Mammary epithelial cell (primary cell): ENCODE measurements at regions of chr6 and their contacts with region 1.

Region 1: DNA sequence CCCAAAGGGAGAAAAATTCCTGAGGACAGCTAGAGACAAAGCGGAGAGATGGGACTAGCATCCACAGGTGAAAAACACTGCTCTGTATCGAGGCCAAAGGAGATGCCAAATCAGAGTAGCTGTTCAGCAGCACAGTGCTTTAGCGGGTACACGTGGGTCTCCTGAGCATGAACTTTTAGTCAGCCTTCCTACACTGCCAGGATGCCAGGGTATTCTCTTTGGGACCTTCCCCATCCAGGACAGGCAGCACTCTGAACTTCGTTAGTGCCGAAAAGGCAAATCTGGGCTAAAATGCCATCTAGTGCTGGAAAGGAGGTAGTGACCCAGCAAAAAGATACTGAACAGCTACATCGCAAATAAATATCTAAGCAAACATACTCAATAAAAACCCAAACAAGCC is 64.9 kb downstream of the C6orf58 start:
- DNase-seq: peak; percentile 20
- H3K4me3 ChIP-seq: no peak overlapping the region
- H3K27ac ChIP-seq: no peak overlapping the region
- H3K4me1 ChIP-seq: no peaks in the 10 kb centered on the region
- H3K27me3 ChIP-seq: peaks cover 4% of the 10 kb centered on the region
- CTCF ChIP-seq: peak; percentile 67 to 82

Region 2: GRCh38 chr6:127464881-127465459 is 176.9 kb before region 1 on chr6:
- CTCF ChIA-PET with region 1: no interaction called
- dilution Hi-C with region 1: no loop called
- in situ Hi-C with region 1: no loop called
- intact Hi-C with region 1: loop called (anchors 5 kb)
- DNase-seq: peak; percentile 43
- H3K4me3 ChIP-seq: no peak overlapping the region
- H3K27ac ChIP-seq: no peak overlapping the region
- H3K4me1 ChIP-seq: no peaks in the 10 kb centered on the region
- H3K27me3 ChIP-seq: peaks cover 3% of the 10 kb centered on the region
- CTCF ChIP-seq: peak; percentile 92 to 93

Region 3: DNA sequence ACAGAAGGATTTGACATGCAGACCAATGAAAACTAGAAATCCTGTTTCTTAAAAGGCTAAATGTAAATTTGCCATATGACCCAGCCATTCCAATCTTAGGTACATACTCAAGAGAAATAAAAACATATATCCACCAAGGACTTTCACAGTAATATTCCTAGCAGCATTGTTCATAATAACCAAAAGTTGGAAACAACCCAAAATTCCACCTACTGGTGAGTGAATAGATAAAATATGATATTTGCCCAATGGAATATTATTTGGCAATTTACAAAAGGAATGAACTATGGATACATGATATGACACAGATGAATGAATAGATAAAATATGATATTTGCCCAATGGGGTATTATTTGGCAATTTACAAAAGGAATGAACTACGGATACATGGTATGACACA is 145.4 kb before region 1 on chr6:
- CTCF ChIA-PET with region 1: no interaction called
- dilution Hi-C with region 1: no loop called
- in situ Hi-C with region 1: no loop called
- intact Hi-C with region 1: no loop called
- DNase-seq: peak; percentile 8
- H3K4me3 ChIP-seq: no peak overlapping the region
- H3K27ac ChIP-seq: no peak overlapping the region
- H3K4me1 ChIP-seq: no peaks in the 10 kb centered on the region
- H3K27me3 ChIP-seq: peaks cover 2% of the 10 kb centered on the region
- CTCF ChIP-seq: peak; percentile 2 to 11

Region 4: DNA sequence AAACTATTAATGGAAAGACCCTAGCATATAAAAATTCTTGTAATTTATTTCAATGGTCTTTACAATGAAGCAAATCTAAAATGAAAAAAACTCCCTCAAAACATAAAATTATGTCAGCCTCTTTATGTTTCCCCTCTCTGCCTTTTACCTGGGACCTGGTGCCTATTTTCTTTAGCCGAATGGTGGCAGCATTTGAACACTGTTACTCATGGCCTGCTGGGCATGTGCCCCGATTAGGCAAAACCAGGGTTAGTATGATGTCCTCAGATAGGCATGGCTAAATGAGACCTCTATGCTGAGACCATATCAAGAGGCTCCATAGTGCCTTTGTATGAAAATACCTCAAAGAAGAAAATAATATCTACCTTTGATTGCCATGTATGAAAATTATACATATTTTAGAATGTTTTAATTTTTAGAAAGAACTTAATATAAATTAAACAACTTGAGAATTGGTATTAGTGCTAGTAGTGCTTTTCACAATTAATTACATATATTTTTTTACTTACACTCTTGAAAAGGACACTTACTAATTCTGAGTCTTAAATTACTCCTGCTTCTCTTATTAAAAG is 87.4 kb before region 1 on chr6:
- CTCF ChIA-PET with region 1: no interaction called
- dilution Hi-C with region 1: no loop called
- in situ Hi-C with region 1: loop called in 1 of 2 experiments (anchors 10 kb)
- intact Hi-C with region 1: loop called (anchors 1 kb)
- DNase-seq: peak; percentile 41
- H3K4me3 ChIP-seq: no peak overlapping the region
- H3K27ac ChIP-seq: no peak overlapping the region
- H3K4me1 ChIP-seq: no peaks in the 10 kb centered on the region
- H3K27me3 ChIP-seq: peaks cover 3% of the 10 kb centered on the region
- CTCF ChIP-seq: peak; percentile 60 to 73

Region 5: GRCh38 chr6:127592964-127593363 is 48.9 kb before region 1 on chr6:
- CTCF ChIA-PET with region 1: no interaction called
- dilution Hi-C with region 1: no loop called
- in situ Hi-C with region 1: no loop called
- intact Hi-C with region 1: no loop called
- DNase-seq: no peak
- H3K4me3 ChIP-seq: no peak overlapping the region
- H3K27ac ChIP-seq: no peak overlapping the region
- H3K4me1 ChIP-seq: peaks cover 8% of the 10 kb centered on the region
- H3K27me3 ChIP-seq: no peaks in the 10 kb centered on the region
- CTCF ChIP-seq: no peak